ENCODE measurements at regions of chr12 and their contacts with region 1.

Region 1: DNA sequence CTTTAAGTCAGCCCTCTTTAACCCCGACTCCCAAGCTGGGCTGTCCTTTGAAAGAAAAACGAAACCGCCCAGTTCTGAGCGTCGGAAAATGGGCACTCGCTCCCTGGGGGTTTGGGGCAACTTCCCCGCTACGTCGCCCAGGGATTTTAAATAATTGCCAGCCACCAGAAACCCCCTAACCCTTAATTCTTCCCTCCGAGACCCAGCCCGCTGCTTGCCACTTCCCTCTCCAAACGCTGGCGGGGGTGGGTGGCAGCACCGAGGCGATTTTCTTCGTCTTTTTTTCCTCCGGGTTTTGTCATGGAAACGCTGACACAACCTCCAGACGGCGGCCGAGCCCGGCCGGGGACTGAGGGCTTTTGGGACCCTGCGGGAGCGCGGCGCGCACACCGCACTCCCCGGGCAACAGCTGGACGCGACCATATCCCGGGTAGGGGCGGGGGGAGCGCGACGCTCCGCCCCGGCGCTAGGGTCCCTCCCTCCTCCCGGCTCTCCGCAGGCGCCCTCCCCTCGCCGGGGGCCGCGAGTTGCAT is at the start of gene CHST11:
- DNase-seq: peak; percentile 82
- H3K4me3 ChIP-seq: peak within 1 kb of the TSS; percentile 56 to 77 (median 68)
- H3K27ac ChIP-seq: peak within 1 kb of the TSS; percentile 60
- H3K4me1 ChIP-seq: peaks cover 36% of the 10 kb centered on the region
- H3K27me3 ChIP-seq: no peaks in the 10 kb centered on the region
- CTCF ChIP-seq: peak in 1 of 2 donors; percentile 37
- total RNA-seq, gene CHST11: 7.7 to 35.5 TPM

Region 2: GRCh38 chr12:104546575-104546974 is 90.1 kb after region 1 on chr12:
- CTCF ChIA-PET with region 1: no interaction called
- dilution Hi-C with region 1: loop called (anchors 5 kb)
- in situ Hi-C with region 1: no loop called
- intact Hi-C with region 1: loop called (anchors 5 kb)
- DNase-seq: peak; percentile 65
- H3K4me3 ChIP-seq: peak overlapping the region in 2 of 3 experiments; percentile 2 to 3
- H3K27ac ChIP-seq: no peak overlapping the region
- H3K4me1 ChIP-seq: peaks cover 24% of the 10 kb centered on the region
- H3K27me3 ChIP-seq: no peaks in the 10 kb centered on the region
- CTCF ChIP-seq: no peak

Region 3: GRCh38 chr12:104604070-104604994 is 147.8 kb after region 1 on chr12:
- CTCF ChIA-PET with region 1: no interaction called
- dilution Hi-C with region 1: no loop called
- in situ Hi-C with region 1: no loop called
- intact Hi-C with region 1: loop called (anchors 1 kb)
- DNase-seq: peak; percentile 94
- H3K4me3 ChIP-seq: peak overlapping the region in 2 of 3 experiments; percentile 2 to 28
- H3K27ac ChIP-seq: peak overlapping the region; percentile 84
- H3K4me1 ChIP-seq: peaks cover 48% of the 10 kb centered on the region
- H3K27me3 ChIP-seq: no peaks in the 10 kb centered on the region
- CTCF ChIP-seq: no peak

Region 4: DNA sequence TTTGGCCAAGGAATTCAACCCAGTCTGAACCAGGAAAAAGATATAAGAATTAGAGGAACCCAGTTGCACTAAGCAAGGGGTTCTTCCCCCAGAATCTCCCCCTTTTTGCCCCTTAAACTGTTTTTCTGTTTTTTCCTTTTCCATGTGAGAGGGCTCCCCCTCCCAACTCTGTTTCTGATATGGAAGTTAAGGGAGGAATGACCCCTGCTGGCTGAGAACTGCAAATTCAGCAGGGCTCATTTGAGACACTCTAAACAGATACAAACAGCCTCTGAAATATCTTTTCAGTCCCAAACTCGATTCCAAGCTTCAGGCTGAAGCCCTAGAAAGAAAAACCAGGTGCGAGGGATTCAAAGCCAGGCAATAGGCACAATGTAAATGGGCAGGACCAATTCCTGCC is 368.9 kb after region 1 on chr12:
- CTCF ChIA-PET with region 1: no interaction called
- dilution Hi-C with region 1: no loop called
- in situ Hi-C with region 1: no loop called
- intact Hi-C with region 1: loop called (anchors 5 kb)
- DNase-seq: peak; percentile 14
- H3K4me3 ChIP-seq: no peak overlapping the region
- H3K27ac ChIP-seq: no peak overlapping the region
- H3K4me1 ChIP-seq: no peaks in the 10 kb centered on the region
- H3K27me3 ChIP-seq: no peaks in the 10 kb centered on the region
- CTCF ChIP-seq: peak; percentile 26 to 42

Region 5: DNA sequence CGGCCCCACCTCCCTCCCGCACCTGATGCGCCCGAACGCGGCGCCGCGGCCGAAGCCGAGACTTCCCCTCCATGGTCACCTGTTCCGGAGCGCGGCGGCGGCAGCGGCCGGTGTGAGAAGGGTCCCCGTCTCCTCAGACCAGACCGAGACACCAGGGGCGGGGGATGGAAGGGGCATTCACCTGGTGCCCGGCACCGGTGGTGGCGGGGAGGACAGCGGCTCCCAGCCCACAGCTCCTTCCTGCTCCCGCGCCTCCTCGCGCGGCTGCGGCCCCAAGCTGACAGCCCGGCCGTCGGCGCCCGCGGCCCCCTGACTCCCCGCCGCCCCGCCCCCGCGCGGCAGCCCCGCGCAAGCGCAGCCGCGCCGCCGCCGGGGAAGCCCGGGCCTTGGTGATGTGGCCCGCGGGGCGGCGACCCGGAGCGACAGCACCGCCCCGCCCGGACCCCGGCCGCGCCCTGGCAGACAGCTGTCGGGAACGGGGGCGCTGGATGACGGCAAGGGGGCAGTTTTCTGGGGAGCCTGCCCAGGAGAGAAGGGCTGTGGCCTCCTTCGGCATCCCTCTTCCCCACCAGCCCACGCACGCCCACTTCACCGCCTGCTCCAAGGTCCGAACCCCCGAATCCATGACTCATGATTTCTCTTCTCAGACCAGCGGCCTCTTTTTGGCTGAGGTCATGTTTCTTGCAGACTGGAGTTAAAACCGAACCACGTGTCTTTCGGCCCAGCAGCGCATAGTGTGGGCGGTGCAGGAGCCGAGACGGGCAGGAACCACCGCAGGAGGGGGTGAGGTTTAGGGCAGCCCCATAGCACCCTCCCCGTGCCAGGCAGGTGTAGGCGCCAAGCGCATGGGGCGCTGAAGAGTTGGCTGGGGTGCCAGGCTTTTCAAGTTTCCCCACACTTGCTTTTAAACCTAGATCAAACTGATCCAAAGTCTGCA is 501.8 kb after region 1 on chr12 and contains the start of gene SLC41A2:
- CTCF ChIA-PET with region 1: no interaction called
- dilution Hi-C with region 1: no loop called
- in situ Hi-C with region 1: no loop called
- intact Hi-C with region 1: loop called (anchors 2 kb)
- DNase-seq: peak; percentile 86
- H3K4me3 ChIP-seq: peak within 1 kb of the TSS; percentile 72 to 96 (median 86)
- H3K27ac ChIP-seq: peak within 1 kb of the TSS; percentile 68
- H3K4me1 ChIP-seq: peaks cover 18% of the 10 kb centered on the region
- H3K27me3 ChIP-seq: no peaks in the 10 kb centered on the region
- CTCF ChIP-seq: peak; percentile 10 to 47
- total RNA-seq, gene SLC41A2: 11.9 to 17.8 TPM

Measured in mammary epithelial cell (primary cell).